ENCODE measurements at regions of chr2 and their contacts with region 1.

Region 1: GRCh38 chr2:69674316-69674670 is 30.8 kb upstream of the AAK1 start:
- DNase-seq: no peak
- ATAC-seq: no peak
- H3K4me3 ChIP-seq: no peak overlapping the region
- H3K4me3 Mint-ChIP-seq: no peak overlapping the region
- H3K27ac ChIP-seq: no peak overlapping the region
- H3K27ac Mint-ChIP-seq: peak overlapping the region in 1 of 9 donors; percentile 68
- H3K4me1 ChIP-seq: no peaks in the 10 kb centered on the region
- H3K4me1 Mint-ChIP-seq: peaks cover 0 to 35% (median 24%) of the 10 kb centered on the region in 7 donors
- H3K27me3 ChIP-seq: no peaks in the 10 kb centered on the region
- H3K27me3 Mint-ChIP-seq: no peaks in the 10 kb centered on the region

Region 2: DNA sequence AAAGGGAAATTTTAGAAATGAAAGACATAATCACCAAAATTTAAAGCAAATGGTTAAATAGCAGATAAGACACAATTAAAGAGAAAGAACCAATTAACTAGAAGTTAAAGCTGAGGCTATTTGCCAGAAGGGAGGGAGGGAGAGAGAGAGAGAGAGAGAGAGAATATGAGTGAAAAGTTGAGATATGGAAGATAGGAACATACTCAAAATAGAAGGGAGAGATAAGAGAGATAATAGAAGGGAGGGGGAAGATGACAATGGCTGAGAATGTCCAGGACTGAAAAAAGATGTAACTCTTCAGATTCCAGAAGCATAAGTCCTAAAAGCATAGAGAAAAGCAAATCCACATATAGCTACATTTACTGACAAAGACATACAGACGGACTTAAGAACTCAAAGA is 13.7 kb before region 1 on chr2:
- CTCF ChIA-PET with region 1: no interaction called
- POLR2A ChIA-PET with region 1: interaction called, 8 read pairs
- intact Hi-C with region 1: loop called in 1 of 2 experiments (anchors 2 kb)
- DNase-seq: no peak
- ATAC-seq: no peak
- H3K4me3 ChIP-seq: no peak overlapping the region
- H3K4me3 Mint-ChIP-seq: peak overlapping the region in 4 of 10 donors; percentile 15 to 40 (median 28)
- H3K27ac ChIP-seq: no peak overlapping the region
- H3K27ac Mint-ChIP-seq: peak overlapping the region in 6 of 9 donors; percentile 1 to 55 (median 19)
- H3K4me1 ChIP-seq: peaks cover 0 to 4% of the 10 kb centered on the region in 2 donors
- H3K4me1 Mint-ChIP-seq: peaks cover 5 to 35% (median 22%) of the 10 kb centered on the region in 7 donors
- H3K27me3 ChIP-seq: no peaks in the 10 kb centered on the region
- H3K27me3 Mint-ChIP-seq: no peaks in the 10 kb centered on the region

Region 3: GRCh38 chr2:69781321-69782248 is 107.3 kb after region 1 on chr2:
- CTCF ChIA-PET with region 1: no interaction called
- POLR2A ChIA-PET with region 1: no interaction called
- intact Hi-C with region 1: no loop called
- DNase-seq: no peak
- ATAC-seq: peak; percentile 50
- H3K4me3 ChIP-seq: no peak overlapping the region
- H3K4me3 Mint-ChIP-seq: no peak overlapping the region
- H3K27ac ChIP-seq: no peak overlapping the region
- H3K27ac Mint-ChIP-seq: no peak overlapping the region
- H3K4me1 ChIP-seq: no peaks in the 10 kb centered on the region
- H3K4me1 Mint-ChIP-seq: peaks cover 0 to 24% (median 0%) of the 10 kb centered on the region in 7 donors
- H3K27me3 ChIP-seq: no peaks in the 10 kb centered on the region
- H3K27me3 Mint-ChIP-seq: no peaks in the 10 kb centered on the region

Measured in naive thymus-derived CD4-positive, alpha-beta T cell (primary cell).